ENCODE measurements at regions of chr2 and their contacts with region 1.

Region 1: DNA sequence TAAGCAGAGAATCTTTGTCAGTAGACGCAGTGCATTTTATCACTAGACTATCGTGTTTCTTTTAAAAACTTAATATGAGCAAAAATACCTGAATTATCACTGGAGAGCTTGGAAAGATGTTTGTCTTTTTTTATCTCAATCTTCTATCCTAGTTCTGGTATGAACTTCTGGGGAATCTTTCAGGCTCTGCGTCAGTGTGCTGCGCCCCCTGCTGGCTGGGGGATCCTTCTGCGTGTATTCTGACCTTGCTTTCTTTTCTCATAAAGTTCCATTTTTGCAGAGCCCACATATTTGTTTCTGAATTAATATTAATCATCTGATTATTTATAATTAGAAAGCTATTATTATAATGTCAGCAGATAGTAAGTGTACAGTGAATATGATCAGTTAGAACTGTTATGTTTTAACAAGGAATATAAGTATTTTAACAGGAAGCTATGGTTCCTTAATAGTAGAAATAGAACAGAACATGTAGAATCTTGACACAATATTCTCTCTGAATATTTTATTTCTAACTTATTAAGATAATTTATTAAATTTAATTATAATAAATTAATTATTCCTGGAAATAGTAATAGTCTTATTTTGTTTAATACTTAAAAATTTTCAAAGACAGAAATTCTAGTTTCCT is 945.0 kb upstream of the CRIM1 start:
- DNase-seq: peak; percentile 45
- H3K4me3 ChIP-seq: no peak overlapping the region; a peak in 1 of 4 replicates
- H3K27ac ChIP-seq: no peak overlapping the region
- H3K4me1 ChIP-seq: no peaks in the 10 kb centered on the region
- H3K27me3 ChIP-seq: no peaks in the 10 kb centered on the region
- CTCF ChIP-seq: peak; percentile 100
- EP300 ChIP-seq: no peak
- RAD21 ChIP-seq: peak; percentile 74

Region 2: DNA sequence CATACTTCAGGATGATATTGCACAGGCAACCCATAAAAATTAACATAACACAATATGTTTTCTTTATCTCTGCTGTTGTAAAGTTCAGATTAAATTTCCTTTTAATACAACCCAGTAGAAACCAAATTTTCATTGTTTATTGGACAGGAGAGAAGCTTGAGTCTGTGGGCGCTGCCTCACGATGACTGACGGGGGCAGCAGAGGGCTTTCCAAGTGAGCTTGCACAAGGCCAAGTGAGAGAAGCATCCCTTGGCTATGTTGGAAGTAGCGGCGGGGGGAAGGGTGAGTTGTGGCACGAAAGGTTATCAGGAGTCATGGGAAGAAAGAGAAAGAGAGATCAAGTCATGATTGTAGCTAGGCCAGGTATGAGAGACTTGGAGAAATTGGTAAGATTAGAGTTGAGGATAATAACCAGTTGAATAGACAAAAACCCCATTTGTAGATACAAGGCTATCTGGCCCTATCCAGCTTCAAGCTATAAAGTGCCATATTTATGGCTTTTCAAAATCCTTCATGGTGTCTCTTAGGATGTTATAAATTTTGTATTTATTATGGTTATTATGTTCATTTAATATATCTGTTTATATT is 1397.7 kb before region 1 on chr2:
- CTCF ChIA-PET with region 1: interaction called, 19 read pairs
- POLR2A ChIA-PET with region 1: no interaction called
- DNase-seq: peak; percentile 52
- H3K4me3 ChIP-seq: peak overlapping the region in 1 of 2 experiments; percentile 30; a peak in 1 of 4 replicates
- H3K27ac ChIP-seq: no peak overlapping the region
- H3K4me1 ChIP-seq: no peaks in the 10 kb centered on the region
- H3K27me3 ChIP-seq: no peaks in the 10 kb centered on the region
- CTCF ChIP-seq: peak; percentile 76
- EP300 ChIP-seq: no peak
- RAD21 ChIP-seq: peak; percentile 79

Region 3: GRCh38 chr2:35365859-35366258 is 44.7 kb before region 1 on chr2:
- CTCF ChIA-PET with region 1: interaction called, 14 read pairs
- POLR2A ChIA-PET with region 1: no interaction called
- DNase-seq: peak; percentile 5
- H3K4me3 ChIP-seq: no peak overlapping the region
- H3K27ac ChIP-seq: no peak overlapping the region
- H3K4me1 ChIP-seq: no peaks in the 10 kb centered on the region
- H3K27me3 ChIP-seq: no peaks in the 10 kb centered on the region
- CTCF ChIP-seq: peak; percentile 33; the same call in 1 of the 2 replicates
- EP300 ChIP-seq: no peak
- RAD21 ChIP-seq: no peak

Region 4: GRCh38 chr2:35421485-35421884 is 10.9 kb after region 1 on chr2:
- CTCF ChIA-PET with region 1: interaction called, 41 read pairs
- POLR2A ChIA-PET with region 1: no interaction called
- DNase-seq: no peak
- H3K4me3 ChIP-seq: no peak overlapping the region
- H3K27ac ChIP-seq: no peak overlapping the region
- H3K4me1 ChIP-seq: no peaks in the 10 kb centered on the region
- H3K27me3 ChIP-seq: no peaks in the 10 kb centered on the region
- CTCF ChIP-seq: no peak
- EP300 ChIP-seq: no peak
- RAD21 ChIP-seq: no peak

Region 5: GRCh38 chr2:35447215-35447614 is 36.7 kb after region 1 on chr2:
- CTCF ChIA-PET with region 1: interaction called, 10 read pairs
- POLR2A ChIA-PET with region 1: no interaction called
- DNase-seq: no peak
- H3K4me3 ChIP-seq: no peak overlapping the region
- H3K27ac ChIP-seq: no peak overlapping the region
- H3K4me1 ChIP-seq: no peaks in the 10 kb centered on the region
- H3K27me3 ChIP-seq: no peaks in the 10 kb centered on the region
- CTCF ChIP-seq: no peak
- EP300 ChIP-seq: no peak
- RAD21 ChIP-seq: no peak

Region 6: GRCh38 chr2:35510636-35511035 is 100.1 kb after region 1 on chr2:
- CTCF ChIA-PET with region 1: no interaction called
- POLR2A ChIA-PET with region 1: no interaction called
- DNase-seq: no peak
- H3K4me3 ChIP-seq: no peak overlapping the region
- H3K27ac ChIP-seq: no peak overlapping the region
- H3K4me1 ChIP-seq: no peaks in the 10 kb centered on the region
- H3K27me3 ChIP-seq: no peaks in the 10 kb centered on the region
- CTCF ChIP-seq: no peak
- EP300 ChIP-seq: no peak
- RAD21 ChIP-seq: no peak